Heart left ventricle (tissue), 16 donors: ENCODE measurements at regions of chr5 and their contacts with region 1.

Region 1: DNA sequence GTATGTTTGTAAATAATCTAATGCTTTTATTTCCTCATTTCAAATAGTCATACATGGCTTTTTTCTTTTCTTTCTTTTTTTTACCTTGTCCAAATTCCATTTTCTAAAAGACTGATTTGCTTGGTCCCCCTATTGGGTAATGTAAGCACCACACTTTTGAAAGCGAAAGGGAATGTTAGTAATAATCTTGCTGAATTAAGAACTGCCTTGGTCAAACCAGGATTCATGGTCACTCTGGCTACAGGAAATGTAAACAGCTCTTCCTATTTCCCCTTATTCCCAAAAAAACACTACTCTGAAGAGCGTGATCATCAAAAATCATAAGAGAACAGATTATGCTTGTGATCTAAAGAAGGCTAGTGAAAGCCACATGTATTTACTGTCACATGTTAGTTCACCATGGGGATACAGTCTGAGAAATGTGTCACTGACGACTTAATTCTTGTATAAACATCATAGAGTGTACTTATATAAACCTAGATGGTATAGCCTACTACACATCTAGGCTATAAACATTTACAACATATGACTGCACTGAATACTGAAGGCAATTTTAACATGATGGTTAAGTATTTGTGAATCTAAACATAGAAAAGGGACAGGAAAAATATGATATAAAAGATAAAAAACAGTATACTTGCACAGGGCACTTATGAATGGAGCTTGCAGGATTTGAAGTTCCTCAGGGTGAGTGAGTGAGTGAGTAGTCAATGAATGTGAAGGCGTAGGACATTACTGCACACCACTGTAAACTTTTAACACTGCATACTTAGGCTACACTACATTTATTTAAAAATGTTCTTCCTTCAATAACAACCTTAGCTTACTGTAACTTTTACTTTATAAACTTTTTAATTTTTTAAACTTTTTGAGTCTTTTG is 75.3 kb downstream of the HMGCR start:
- DNase-seq: no peak
- ATAC-seq: peak in 2 of 4 donors; percentile 22 to 27
- H3K4me3 ChIP-seq: no peak overlapping the region
- H3K27ac ChIP-seq: peak overlapping the region in 1 of 12 donors; percentile 36
- H3K4me1 ChIP-seq: no peaks in the 10 kb centered on the region
- H3K27me3 ChIP-seq: no peaks in the 10 kb centered on the region
- CTCF ChIP-seq: no peak
- POLR2A ChIP-seq: no peak

Region 2: GRCh38 chr5:74127381-74128320 is 1284.7 kb before region 1 on chr5:
- intact Hi-C with region 1: no loop called
- DNase-seq: peak in 2 of 5 donors; percentile 27 to 29
- ATAC-seq: peak; percentile 14 to 86 (median 68)
- H3K4me3 ChIP-seq: no peak overlapping the region
- H3K27ac ChIP-seq: peak overlapping the region in 1 of 12 donors; percentile 13
- H3K4me1 ChIP-seq: peaks cover 0 to 25% (median 12%) of the 10 kb centered on the region in 12 donors
- H3K27me3 ChIP-seq: no peaks in the 10 kb centered on the region
- CTCF ChIP-seq: peak in 1 of 12 donors; percentile 6
- POLR2A ChIP-seq: no peak

Region 3: DNA sequence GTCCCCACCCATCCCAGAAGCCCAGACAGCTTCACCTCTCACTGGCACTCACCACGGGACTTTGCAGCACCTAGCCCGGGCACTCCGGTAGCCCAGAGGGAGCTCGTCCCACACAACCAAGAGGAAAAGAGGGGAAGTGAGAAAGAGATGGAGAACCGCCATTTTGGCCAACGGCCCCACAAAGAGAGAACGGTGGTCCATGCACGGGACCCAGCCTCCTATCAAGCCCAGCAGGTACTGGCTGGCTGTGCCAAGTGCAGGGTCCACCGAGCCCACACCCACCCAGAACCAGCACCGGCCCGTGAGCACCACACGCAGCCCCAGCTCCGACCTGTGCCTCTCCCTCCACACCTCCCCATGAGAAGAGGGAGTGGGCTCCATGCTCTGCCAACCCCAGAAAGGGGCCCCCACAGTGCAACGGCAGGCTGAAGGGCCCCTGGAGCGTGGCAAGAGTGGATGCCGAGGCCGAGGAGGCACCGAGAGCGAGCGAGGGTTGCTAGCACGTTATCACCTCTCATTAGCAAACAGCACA is 281.5 kb before region 1 on chr5:
- intact Hi-C with region 1: no loop called
- DNase-seq: no peak
- ATAC-seq: no peak
- H3K4me3 ChIP-seq: no peak overlapping the region
- H3K27ac ChIP-seq: no peak overlapping the region
- H3K4me1 ChIP-seq: no peaks in the 10 kb centered on the region
- H3K27me3 ChIP-seq: no peaks in the 10 kb centered on the region
- CTCF ChIP-seq: no peak
- POLR2A ChIP-seq: no peak

Region 4: DNA sequence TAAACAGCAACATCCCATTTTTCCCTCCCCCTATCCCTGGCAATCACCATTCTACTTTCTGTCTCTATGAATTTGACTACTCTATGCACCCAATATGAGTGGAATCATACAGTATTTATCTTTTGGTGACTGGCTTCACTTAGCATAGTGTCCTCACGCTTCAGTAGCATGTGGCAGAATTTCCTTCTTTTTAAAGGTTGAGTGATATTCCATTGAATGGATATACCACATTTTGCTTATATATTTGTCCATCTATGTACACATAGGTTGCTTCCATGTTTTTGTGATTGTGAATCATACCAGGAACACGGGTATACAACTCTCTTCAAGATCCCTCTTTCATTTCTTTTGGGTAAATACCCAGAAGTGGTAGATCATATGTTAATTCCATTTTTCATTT is 29.2 kb after region 1 on chr5:
- intact Hi-C with region 1: loop called in 1 of 10 experiments (anchors 1 kb)
- DNase-seq: no peak
- ATAC-seq: no peak
- H3K4me3 ChIP-seq: no peak overlapping the region
- H3K27ac ChIP-seq: no peak overlapping the region
- H3K4me1 ChIP-seq: peaks cover 0 to 10% (median 0%) of the 10 kb centered on the region in 12 donors
- H3K27me3 ChIP-seq: no peaks in the 10 kb centered on the region
- CTCF ChIP-seq: no peak
- POLR2A ChIP-seq: no peak